ENCODE measurements at regions of chr2 and their contacts with region 1.

Region 1: GRCh38 chr2:175036582-175037018 is 31.4 kb upstream of the CHN1 start:
- DNase-seq: no peak
- H3K4me3 Mint-ChIP-seq: no peak overlapping the region
- H3K27ac Mint-ChIP-seq: no peak overlapping the region
- H3K4me1 Mint-ChIP-seq: no peaks in the 10 kb centered on the region
- H3K27me3 Mint-ChIP-seq: no peaks in the 10 kb centered on the region
- CTCF ChIP-seq: no peak

Region 2: GRCh38 chr2:175282290-175282689 is 245.7 kb after region 1 on chr2:
- CTCF ChIA-PET with region 1: no interaction called
- intact Hi-C with region 1: loop called (anchors 1 kb)
- DNase-seq: no peak
- H3K4me3 Mint-ChIP-seq: no peak overlapping the region
- H3K27ac Mint-ChIP-seq: no peak overlapping the region
- H3K4me1 Mint-ChIP-seq: no peaks in the 10 kb centered on the region
- H3K27me3 Mint-ChIP-seq: peaks cover 25% of the 10 kb centered on the region
- CTCF ChIP-seq: peak; percentile 41